Activated T-helper 2 cell treated with anti-CD3 and anti-CD28 coated beads, Interferon-gamma antibody, Interleukin-2, Interleukin-4, amounts not matched to agents 10 μg/mL and 5 μg/mL and 100 μg/mL, durations not matched to agents 14 hours and 24 hours and 36 hours (primary cell): ENCODE measurements at regions of chr12 and their contacts with region 1.

Region 1: GRCh38 chr12:44827832-44828438 is 48.2 kb downstream of the NELL2 start:
- DNase-seq: no peak
- H3K4me3 Mint-ChIP-seq: peak overlapping the region; percentile 30
- H3K27ac Mint-ChIP-seq: peak overlapping the region; percentile 72
- H3K4me1 Mint-ChIP-seq: peaks cover 33% of the 10 kb centered on the region
- H3K27me3 Mint-ChIP-seq: no peaks in the 10 kb centered on the region

Region 2: GRCh38 chr12:44570036-44570583 is 257.8 kb before region 1 on chr12:
- intact Hi-C with region 1: no loop called
- DNase-seq: no peak
- H3K4me3 Mint-ChIP-seq: no peak overlapping the region
- H3K27ac Mint-ChIP-seq: no peak overlapping the region
- H3K4me1 Mint-ChIP-seq: no peaks in the 10 kb centered on the region
- H3K27me3 Mint-ChIP-seq: no peaks in the 10 kb centered on the region

Region 3: DNA sequence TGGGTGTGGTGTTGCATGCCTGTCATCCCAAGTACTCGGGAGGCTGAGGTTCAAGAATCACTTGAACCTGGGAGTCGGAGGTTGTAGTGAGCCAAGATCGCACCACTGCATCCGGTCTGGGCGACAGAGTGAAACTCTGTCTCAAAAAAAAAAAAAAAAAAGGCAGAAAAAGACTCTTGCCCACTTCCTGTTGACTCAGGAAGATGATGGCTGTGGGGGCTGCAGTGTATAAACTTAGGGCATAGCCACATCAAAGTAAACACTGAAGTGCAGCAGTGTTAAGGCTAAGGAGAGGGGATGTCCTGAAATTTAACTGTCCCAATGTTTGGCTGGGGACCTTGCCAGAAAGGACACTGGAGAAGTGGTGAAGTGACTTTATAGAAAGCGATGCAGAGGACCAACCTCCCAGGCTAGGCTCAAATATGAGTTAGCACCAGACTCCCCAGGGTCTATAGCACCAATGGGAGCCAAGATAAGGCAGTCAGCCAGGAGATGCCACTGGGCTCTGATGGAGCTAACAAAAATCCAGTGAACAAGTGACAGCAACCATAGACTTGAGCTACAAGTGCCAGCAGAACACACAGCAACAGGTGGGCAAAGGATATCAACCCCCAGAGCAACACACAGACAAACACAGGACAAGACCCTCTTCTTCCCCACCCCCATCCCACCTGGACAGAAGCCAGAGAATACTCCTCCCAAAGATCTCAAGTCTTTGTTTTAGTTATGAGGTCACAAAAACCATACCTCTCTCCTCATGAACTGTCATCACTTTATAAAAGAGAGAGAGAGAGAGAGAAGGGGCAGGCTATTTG is 20.2 kb after region 1 on chr12:
- intact Hi-C with region 1: loop called (anchors 1 kb)
- DNase-seq: peak; percentile 60
- H3K4me3 Mint-ChIP-seq: peak overlapping the region; percentile 46
- H3K27ac Mint-ChIP-seq: peak overlapping the region; percentile 90
- H3K4me1 Mint-ChIP-seq: peaks cover 60% of the 10 kb centered on the region
- H3K27me3 Mint-ChIP-seq: no peaks in the 10 kb centered on the region

Region 4: GRCh38 chr12:44875954-44876553 is 48.1 kb after region 1 on chr12 and contains the start of gene NELL2:
- intact Hi-C with region 1: loop called (anchors 5 kb)
- DNase-seq: peak; percentile 33
- H3K4me3 Mint-ChIP-seq: peak within 1 kb of the TSS; percentile 93
- H3K27ac Mint-ChIP-seq: no peak within 1 kb of the TSS
- H3K4me1 Mint-ChIP-seq: peaks cover 26% of the 10 kb centered on the region
- H3K27me3 Mint-ChIP-seq: peaks cover 39% of the 10 kb centered on the region
- total RNA-seq, gene NELL2: 7.7 and 10.2 TPM in 2 replicates